GM13977 (cell line): ENCODE measurements at regions of chr1 and their contacts with region 1.

Region 1: GRCh38 chr1:157163273-157164127 is 25.3 kb upstream of the ETV3 start:
- DNase-seq: peak; percentile 76
- CTCF ChIP-seq: peak; percentile 93

Region 2: DNA sequence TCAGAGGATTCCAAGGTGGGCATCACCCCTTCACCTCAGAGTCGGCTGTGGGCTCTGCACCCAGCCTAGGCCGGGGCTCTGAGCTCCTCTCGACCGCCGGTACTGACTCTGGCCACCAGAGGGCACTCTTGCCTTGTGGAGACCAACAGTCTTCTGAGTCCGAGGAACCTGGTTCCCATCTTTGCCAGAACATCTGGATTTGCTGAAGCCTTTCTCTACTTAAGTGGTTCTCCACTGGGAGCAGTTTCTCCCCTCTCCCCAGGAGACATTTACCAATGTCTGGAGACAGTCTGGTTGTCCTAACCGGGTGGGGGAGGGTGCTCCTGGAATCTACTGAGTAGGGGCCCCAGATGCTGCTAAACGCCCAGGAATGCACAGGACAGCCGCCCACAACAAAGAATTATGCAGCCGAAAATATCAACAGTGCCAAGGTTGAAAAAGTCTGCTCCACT is 73.3 kb before region 1 on chr1:
- in situ Hi-C with region 1: loop called (anchors 5 kb)
- DNase-seq: peak; percentile 85
- CTCF ChIP-seq: peak; percentile 96

Region 3: DNA sequence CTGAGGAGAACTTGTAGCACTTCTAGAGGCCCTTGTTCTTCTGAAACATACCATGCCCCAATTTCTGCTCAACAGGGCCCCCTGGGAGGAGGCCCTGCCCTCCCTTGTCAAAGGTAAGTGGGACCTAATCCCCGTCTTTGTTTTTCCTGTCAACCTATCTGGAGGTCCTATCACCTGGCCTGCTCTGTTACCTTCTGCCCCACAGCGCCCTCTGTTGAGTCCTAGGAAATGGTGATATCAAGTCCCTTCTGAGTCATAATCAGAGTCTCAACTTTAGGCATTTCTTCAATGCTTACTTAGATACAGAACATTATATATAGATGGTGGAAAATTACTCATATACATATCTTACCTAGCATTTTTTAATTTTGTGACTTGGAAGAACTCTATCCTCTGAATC is 462.6 kb after region 1 on chr1:
- in situ Hi-C with region 1: no loop called
- DNase-seq: peak; percentile 38
- CTCF ChIP-seq: peak; percentile 72